HepG2 (cell line): ENCODE measurements at regions of chrX and their contacts with region 1.

Region 1: GRCh38 chrX:33434256-33435092 is 223.1 kb upstream of the DMD start:
- DNase-seq: peak; percentile 9
- ATAC-seq: peak; percentile 61
- H3K4me3 ChIP-seq: no peak overlapping the region
- H3K27ac ChIP-seq: no peak overlapping the region
- H3K4me1 ChIP-seq: no peaks in the 10 kb centered on the region
- H3K27me3 ChIP-seq: no peaks in the 10 kb centered on the region
- CTCF ChIP-seq: peak; percentile 60
- EP300 ChIP-seq: no peak
- POLR2A ChIP-seq: no peak
- RAD21 ChIP-seq: no peak

Region 2: DNA sequence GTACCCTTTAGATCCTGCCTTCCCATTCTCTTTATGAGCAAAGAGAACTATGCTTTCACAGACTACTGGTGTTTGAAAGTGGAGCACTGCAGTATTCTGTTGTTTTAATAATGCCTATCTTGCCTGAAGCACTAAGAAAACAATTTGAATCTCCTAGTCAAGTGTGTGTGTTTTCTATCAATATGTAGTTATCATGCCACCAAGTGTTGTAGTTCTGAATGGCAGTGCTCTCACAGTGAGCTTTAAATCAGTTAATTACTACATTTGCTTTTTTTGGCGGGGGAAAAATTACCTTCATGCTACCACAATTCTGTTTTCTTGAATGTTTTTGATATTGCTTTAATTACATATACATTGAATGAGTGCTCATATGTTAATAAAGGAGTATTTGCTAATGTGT is 841.2 kb after region 1 on chrX:
- CTCF ChIA-PET with region 1: no interaction called
- POLR2A ChIA-PET with region 1: no interaction called
- in situ Hi-C with region 1: loop called (anchors 25 kb)
- intact Hi-C with region 1: no loop called
- DNase-seq: no peak
- ATAC-seq: no peak
- H3K4me3 ChIP-seq: no peak overlapping the region
- H3K27ac ChIP-seq: no peak overlapping the region
- H3K4me1 ChIP-seq: no peaks in the 10 kb centered on the region
- H3K27me3 ChIP-seq: no peaks in the 10 kb centered on the region
- CTCF ChIP-seq: no peak
- EP300 ChIP-seq: no peak
- POLR2A ChIP-seq: no peak
- RAD21 ChIP-seq: no peak